HEK293T (cell line): ENCODE measurements at regions of chr5 and their contacts with region 1.

Region 1: GRCh38 chr5:418681-419121 is 24.3 kb upstream of the EXOC3 start:
- DNase-seq: no peak

Region 2: GRCh38 chr5:317086-317811 is 101.5 kb before region 1 on chr5:
- CTCF ChIA-PET with region 1: interaction called, 14 read pairs
- POLR2A ChIA-PET with region 1: interaction called, 16 read pairs
- DNase-seq: peak; percentile 86

Region 3: GRCh38 chr5:343461-344401 is 75.0 kb before region 1 on chr5:
- CTCF ChIA-PET with region 1: no interaction called
- POLR2A ChIA-PET with region 1: interaction called, 11 read pairs
- DNase-seq: peak; percentile 79

Region 4: GRCh38 chr5:373710-374602 is 44.7 kb before region 1 on chr5:
- CTCF ChIA-PET with region 1: interaction called, 4 read pairs
- POLR2A ChIA-PET with region 1: interaction called, 11 read pairs
- DNase-seq: peak; percentile 85

Region 5: DNA sequence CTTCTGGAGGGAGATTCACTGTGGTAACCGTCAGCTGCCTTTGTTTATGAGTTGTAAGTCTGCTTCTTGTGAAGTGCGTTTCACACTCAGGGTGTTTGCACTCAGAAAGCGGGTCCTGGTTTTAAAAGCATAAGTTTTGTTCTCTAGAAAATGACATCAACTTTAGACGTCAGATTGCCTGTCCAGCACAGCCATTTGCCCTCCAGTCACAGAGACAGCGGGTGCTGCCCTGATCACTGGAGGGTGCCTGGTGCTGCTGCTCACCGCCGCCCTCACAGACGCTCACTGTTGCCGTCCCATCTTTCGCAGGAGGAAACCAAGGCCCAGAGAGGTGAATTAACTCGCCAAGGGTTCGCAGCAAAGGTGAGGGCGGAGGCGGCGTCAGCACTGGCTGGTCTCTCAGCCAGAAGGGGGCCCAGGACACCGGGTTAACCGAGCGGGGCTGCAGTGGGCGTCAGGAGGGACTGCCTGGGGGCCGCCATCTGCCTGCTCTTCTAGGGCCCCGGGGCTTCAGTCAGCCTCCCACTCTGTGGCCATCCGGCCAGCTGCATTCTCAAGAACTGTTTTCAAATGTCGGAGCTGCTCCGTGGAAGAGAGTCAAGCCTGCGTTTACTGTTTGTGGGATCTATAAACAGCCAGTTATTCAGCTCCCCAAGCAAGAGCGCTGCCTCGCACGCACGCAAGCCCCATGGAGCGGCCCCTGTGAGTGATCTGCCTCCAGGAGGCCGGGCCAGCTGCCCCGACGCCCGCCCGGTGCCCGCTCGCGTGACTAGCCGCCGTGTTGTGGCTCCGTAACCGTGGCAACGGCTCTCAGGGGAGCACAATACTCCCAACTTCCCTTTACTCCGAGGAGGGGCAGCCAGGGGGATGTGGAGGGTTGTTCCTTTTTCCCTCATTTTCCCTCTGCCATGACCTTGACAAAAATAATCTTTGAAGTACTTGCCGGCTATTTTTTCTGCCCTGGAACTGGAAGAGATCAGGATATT is 19.1 kb before region 1 on chr5:
- CTCF ChIA-PET with region 1: interaction called, 18 read pairs
- POLR2A ChIA-PET with region 1: interaction called, 39 read pairs
- DNase-seq: peak; percentile 89

Region 6: DNA sequence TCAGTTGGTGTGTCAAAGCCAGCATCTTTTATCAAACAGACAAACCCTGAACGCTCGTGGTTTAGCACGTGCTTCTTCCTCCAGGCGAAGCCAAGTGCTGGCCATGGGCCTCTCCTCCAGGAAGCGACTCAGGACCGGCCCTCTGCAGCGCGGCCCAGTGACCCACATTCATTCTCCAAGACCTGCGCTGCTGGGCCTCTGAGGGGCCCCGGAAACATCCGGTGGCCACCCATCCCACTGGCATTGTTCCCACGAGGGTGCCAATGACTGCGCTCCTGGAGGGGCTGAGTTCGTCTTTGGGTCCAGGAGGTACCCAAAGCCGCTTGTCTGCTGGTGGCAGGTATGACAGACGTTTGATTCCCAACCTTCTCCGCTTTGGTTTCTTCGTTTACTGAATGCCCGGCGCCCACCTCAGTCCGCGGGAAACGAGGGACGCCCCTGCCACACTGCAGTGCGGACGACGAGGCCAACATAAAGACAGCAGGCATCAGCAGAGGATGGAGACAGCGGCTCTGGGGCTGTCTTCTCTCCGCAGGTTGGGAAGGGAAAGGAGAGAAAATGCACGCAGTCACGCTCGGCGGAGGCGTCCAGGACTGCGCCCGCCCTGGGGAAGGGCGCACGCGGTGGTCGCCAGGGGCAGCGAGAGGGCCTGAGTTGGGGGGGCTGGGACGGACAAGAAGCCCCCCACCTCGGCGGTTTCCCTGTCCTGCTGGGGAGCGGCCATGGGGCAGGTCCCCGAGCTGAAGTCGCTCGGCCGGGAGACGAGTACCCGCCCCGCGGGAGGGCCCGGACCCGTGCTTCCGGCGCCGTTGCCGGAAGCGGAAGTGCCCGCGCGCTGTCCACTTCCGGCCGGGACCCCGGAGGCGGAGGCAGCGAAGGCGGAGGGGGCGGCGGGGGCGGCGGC is 23.9 kb after region 1 on chr5 and contains the start of gene EXOC3:
- CTCF ChIA-PET with region 1: interaction called, 3 read pairs
- POLR2A ChIA-PET with region 1: interaction called, 13 read pairs
- DNase-seq: peak; percentile 94